PC-9 (cell line): ENCODE measurements at regions of chr6 and their contacts with region 1.

Region 1: GRCh38 chr6:163413345-163414116 is 987 bp upstream of the QKI start:
- DNase-seq: peak; percentile 62 to 76
- H3K4me3 ChIP-seq: peak overlapping the region; percentile 77
- H3K27ac ChIP-seq: peak overlapping the region; percentile 79
- H3K4me1 ChIP-seq: peaks cover 26% of the 10 kb centered on the region
- H3K27me3 ChIP-seq: no peaks in the 10 kb centered on the region
- CTCF ChIP-seq: no peak

Region 2: GRCh38 chr6:163324411-163325389 is 88.8 kb before region 1 on chr6:
- CTCF ChIA-PET with region 1: no interaction called
- POLR2A ChIA-PET with region 1: no interaction called
- intact Hi-C with region 1: no loop called
- DNase-seq: peak; percentile 3 to 77
- H3K4me3 ChIP-seq: peak overlapping the region; percentile 4; the same call in 1 of the 2 replicates
- H3K27ac ChIP-seq: peak overlapping the region; percentile 60
- H3K4me1 ChIP-seq: peaks cover 33% of the 10 kb centered on the region
- H3K27me3 ChIP-seq: no peaks in the 10 kb centered on the region
- CTCF ChIP-seq: no peak

Region 3: DNA sequence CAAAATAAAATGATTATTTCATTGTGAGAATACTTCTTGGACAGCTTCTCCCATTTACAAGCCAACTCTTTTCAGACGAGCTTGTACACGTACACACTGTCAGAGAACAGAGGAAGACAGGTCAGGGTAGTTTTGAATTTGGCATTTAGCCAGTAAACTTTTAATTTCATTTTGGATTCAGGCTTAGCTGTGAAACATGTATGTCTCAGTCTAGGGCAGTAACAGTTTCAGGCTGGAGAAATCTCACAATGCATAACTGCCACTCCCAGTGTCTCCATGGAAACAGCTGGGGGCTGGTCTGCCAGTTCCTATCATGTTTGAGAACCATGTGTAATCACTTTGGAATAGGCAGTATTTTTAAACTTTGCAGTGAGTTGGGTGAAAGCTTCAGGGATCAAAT is 21.0 kb before region 1 on chr6:
- CTCF ChIA-PET with region 1: interaction called, 5 read pairs
- POLR2A ChIA-PET with region 1: no interaction called
- intact Hi-C with region 1: loop called (anchors 1 kb)
- DNase-seq: peak; percentile 51 to 81
- H3K4me3 ChIP-seq: peak overlapping the region; percentile 55
- H3K27ac ChIP-seq: peak overlapping the region; percentile 98
- H3K4me1 ChIP-seq: peaks cover 42% of the 10 kb centered on the region
- H3K27me3 ChIP-seq: no peaks in the 10 kb centered on the region
- CTCF ChIP-seq: no peak

Region 4: DNA sequence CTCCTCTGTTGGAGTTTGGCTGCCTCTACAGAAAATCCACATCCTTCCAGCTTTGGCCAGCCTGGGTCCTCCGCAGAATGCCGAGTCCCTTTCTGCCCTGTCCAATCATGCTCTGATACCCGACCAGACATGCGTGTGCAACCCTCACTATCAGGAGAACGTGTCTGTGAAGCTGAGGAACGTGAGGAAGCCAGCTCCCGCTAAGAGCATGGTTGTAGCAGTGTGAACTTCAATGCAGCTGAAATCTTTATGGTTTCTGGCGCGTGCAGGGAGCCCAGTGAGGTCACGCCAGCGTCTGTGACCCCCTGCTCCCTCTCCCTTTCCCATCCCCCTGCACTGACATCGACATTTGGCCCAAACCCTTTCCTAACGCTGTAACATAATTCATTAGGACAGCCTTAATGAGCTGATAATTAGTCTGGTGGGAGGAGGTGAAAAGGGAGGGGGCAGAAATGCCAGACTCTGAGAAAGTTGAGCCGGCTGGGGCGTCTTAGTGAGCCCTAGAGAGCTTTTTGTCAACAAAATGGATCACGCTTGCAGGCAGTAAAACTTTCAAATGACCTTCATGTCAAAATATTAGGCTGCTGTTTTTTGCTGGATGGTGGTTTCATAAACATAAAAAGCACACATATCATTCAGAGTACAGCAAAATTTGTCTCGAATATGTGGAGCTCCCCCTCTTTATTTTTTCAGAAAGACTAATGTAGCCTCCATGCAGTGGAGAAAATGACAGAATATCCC is 424.3 kb after region 1 on chr6:
- CTCF ChIA-PET with region 1: no interaction called
- POLR2A ChIA-PET with region 1: interaction called, 11 read pairs
- intact Hi-C with region 1: no loop called
- DNase-seq: no peak
- H3K4me3 ChIP-seq: no peak overlapping the region
- H3K27ac ChIP-seq: no peak overlapping the region
- H3K4me1 ChIP-seq: no peaks in the 10 kb centered on the region
- H3K27me3 ChIP-seq: peaks cover 51% of the 10 kb centered on the region
- CTCF ChIP-seq: no peak

Region 5: DNA sequence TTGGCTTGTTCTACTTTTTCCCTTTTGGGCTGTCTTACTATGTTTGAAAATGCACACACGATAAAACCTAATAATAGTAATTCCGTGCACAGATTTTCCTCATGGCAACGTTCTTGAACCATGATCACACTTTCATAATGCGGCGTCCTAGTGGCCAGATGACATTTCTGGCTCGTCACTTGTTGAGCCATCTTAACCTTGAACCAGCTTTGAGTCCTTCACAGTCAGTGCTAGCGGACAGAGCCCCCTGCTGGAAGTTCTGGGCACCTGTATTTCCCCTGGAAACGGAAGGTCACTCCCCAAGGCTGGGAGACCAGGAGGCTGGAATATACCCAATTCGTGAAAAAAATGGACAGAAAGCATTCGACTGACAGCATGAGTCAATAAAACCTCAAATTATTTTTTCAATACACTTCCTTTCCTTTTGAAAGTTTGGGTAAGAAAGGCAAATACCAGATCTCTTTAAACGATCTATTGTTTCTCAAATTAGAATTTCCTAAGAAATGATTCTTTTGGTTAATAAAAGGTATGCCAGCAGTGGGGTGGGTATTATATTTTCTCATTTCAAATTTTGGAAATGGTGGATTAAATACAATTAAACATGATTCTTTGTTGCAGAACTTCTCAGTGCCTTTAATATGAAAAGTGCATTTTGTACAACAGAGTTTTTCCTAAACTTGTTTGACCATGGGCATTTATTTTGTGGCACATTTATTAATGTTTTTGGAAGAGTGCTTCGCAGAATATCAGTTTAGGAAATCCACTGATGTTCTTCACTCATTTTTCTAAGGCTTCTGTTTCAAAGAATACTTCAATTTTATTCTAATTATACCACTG is 543.3 kb after region 1 on chr6:
- CTCF ChIA-PET with region 1: no interaction called
- POLR2A ChIA-PET with region 1: no interaction called
- intact Hi-C with region 1: loop called (anchors 5 kb)
- DNase-seq: peak; percentile 22 to 35
- H3K4me3 ChIP-seq: no peak overlapping the region
- H3K27ac ChIP-seq: no peak overlapping the region
- H3K4me1 ChIP-seq: no peaks in the 10 kb centered on the region
- H3K27me3 ChIP-seq: peaks cover 41% of the 10 kb centered on the region
- CTCF ChIP-seq: peak; percentile 77

Region 6: GRCh38 chr6:164927288-164928056 is 1513.9 kb after region 1 on chr6:
- CTCF ChIA-PET with region 1: no interaction called
- POLR2A ChIA-PET with region 1: no interaction called
- intact Hi-C with region 1: loop called (anchors 5 kb)
- DNase-seq: peak in 1 of 2 experiments; percentile 38
- H3K4me3 ChIP-seq: no peak overlapping the region
- H3K27ac ChIP-seq: no peak overlapping the region
- H3K4me1 ChIP-seq: no peaks in the 10 kb centered on the region
- H3K27me3 ChIP-seq: no peaks in the 10 kb centered on the region
- CTCF ChIP-seq: peak; percentile 90